ENCODE measurements at regions of chr9 and their contacts with region 1.

Region 1: GRCh38 chr9:72364679-72365524 is at the start of gene ZFAND5:
- DNase-seq: peak; percentile 96
- H3K4me3 ChIP-seq: peak within 1 kb of the TSS; percentile 54 to 88 (median 56)
- H3K27ac ChIP-seq: peak within 1 kb of the TSS; percentile 97
- H3K4me1 ChIP-seq: peaks cover 19% of the 10 kb centered on the region
- H3K27me3 ChIP-seq: no peaks in the 10 kb centered on the region
- CTCF ChIP-seq: no peak
- POLR2A ChIP-seq: peak; percentile 99
- total RNA-seq, gene ZFAND5: 176 and 194 TPM in 2 replicates

Region 2: GRCh38 chr9:70413798-70414775 is 1950.8 kb before region 1 on chr9 and contains the start of gene KLF9:
- CTCF ChIA-PET with region 1: no interaction called
- POLR2A ChIA-PET with region 1: no interaction called
- dilution Hi-C with region 1: no loop called
- intact Hi-C with region 1: loop called (anchors 10 kb)
- DNase-seq: peak; percentile 99
- H3K4me3 ChIP-seq: peak within 1 kb of the TSS; percentile 73 to 94 (median 91)
- H3K27ac ChIP-seq: peak within 1 kb of the TSS; percentile 84
- H3K4me1 ChIP-seq: peaks cover 33% of the 10 kb centered on the region
- H3K27me3 ChIP-seq: no peaks in the 10 kb centered on the region
- CTCF ChIP-seq: no peak
- POLR2A ChIP-seq: no peak
- total RNA-seq, gene KLF9: 17.2 and 23.1 TPM in 2 replicates

Region 3: DNA sequence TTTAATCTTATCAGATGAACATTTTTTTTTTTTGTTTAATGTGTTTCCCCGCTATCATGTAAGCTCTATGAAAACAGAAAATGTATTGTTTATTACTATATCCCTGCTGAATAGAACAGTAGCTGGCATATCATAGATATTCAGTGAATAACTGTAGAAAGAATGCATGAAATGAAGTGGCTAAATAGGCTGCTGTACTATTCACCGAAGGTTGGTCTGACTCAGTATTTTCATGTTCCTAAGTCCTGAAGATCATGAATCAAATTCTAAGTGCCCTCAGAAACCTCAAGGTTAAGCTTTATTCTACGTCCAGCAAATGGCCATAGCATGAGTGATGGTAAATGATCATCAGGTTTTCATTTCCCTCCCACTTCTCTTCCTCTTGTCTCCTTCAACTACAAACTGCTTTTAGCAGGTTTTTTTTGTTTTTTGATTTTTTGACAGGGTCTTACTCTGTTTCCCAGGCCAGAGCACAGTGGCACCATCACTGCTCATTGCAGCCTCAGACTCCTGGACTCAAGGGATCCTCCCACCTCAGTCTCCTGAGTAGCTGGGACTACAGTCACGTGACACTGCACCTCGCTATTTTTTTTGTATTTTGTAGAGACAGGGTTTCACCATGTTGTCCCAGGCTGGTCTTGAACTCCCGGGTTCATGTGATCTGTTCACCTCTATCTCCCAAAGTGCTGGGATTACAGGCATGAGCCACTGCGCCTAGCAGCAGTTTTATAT is 19.2 kb after region 1 on chr9:
- CTCF ChIA-PET with region 1: no interaction called
- POLR2A ChIA-PET with region 1: interaction called, 12 read pairs
- dilution Hi-C with region 1: no loop called
- intact Hi-C with region 1: no loop called
- DNase-seq: no peak
- H3K4me3 ChIP-seq: no peak overlapping the region
- H3K27ac ChIP-seq: no peak overlapping the region
- H3K4me1 ChIP-seq: no peaks in the 10 kb centered on the region
- H3K27me3 ChIP-seq: no peaks in the 10 kb centered on the region
- CTCF ChIP-seq: no peak
- POLR2A ChIP-seq: no peak

Region 4: GRCh38 chr9:72473474-72474261 is 108.8 kb after region 1 on chr9:
- CTCF ChIA-PET with region 1: interaction called, 6 read pairs
- POLR2A ChIA-PET with region 1: interaction called, 11 read pairs
- dilution Hi-C with region 1: no loop called
- intact Hi-C with region 1: loop called (anchors 1 kb)
- DNase-seq: peak; percentile 66
- H3K4me3 ChIP-seq: no peak overlapping the region
- H3K27ac ChIP-seq: peak overlapping the region; percentile 38
- H3K4me1 ChIP-seq: peaks cover 33% of the 10 kb centered on the region
- H3K27me3 ChIP-seq: no peaks in the 10 kb centered on the region
- CTCF ChIP-seq: no peak
- POLR2A ChIP-seq: no peak

Region 5: GRCh38 chr9:72577212-72577753 is 212.4 kb after region 1 on chr9:
- CTCF ChIA-PET with region 1: interaction called, 7 read pairs
- POLR2A ChIA-PET with region 1: interaction called, 29 read pairs
- dilution Hi-C with region 1: no loop called
- intact Hi-C with region 1: loop called (anchors 1 kb)
- DNase-seq: peak; percentile 90
- H3K4me3 ChIP-seq: peak overlapping the region in 1 of 3 experiments; percentile 7
- H3K27ac ChIP-seq: peak overlapping the region; percentile 65
- H3K4me1 ChIP-seq: peaks cover 51% of the 10 kb centered on the region
- H3K27me3 ChIP-seq: no peaks in the 10 kb centered on the region
- CTCF ChIP-seq: no peak
- POLR2A ChIP-seq: no peak

Region 6: DNA sequence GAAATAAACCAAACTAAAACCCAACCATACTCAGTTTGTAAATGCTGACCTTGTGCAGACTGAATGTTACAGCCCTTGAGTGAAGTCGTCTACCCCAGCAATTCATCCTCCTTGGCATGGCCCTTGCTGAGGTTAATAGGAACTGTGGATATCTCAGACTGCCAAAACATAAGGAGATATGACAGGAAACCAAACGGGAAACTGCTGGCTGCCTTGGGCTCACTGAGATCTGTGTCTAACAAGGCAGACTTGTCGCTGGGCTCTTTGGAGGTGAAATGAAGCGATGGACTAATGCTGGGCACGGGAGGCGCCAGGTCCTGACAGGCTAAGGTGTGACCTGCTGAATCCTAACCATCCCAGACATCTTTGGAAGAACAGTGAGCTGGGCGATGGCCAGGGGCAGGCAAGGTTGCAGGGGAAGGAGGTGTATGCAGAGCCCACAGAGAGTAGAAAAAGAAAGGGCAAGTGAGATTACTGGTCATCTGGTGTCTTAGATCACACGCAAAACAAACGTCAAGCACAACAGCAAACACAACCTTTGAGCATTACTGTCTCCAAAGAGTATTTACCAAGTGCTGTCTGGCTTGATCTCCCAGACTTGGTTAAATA is 632.6 kb after region 1 on chr9:
- CTCF ChIA-PET with region 1: no interaction called
- POLR2A ChIA-PET with region 1: no interaction called
- dilution Hi-C with region 1: no loop called
- intact Hi-C with region 1: loop called (anchors 5 kb)
- DNase-seq: peak; percentile 89
- H3K4me3 ChIP-seq: peak overlapping the region in 2 of 3 experiments; percentile 17 to 57
- H3K27ac ChIP-seq: peak overlapping the region; percentile 100
- H3K4me1 ChIP-seq: peaks cover 38% of the 10 kb centered on the region
- H3K27me3 ChIP-seq: no peaks in the 10 kb centered on the region
- CTCF ChIP-seq: no peak
- POLR2A ChIP-seq: peak; percentile 71